Right cardiac atrium (tissue), 5 donors: ENCODE measurements at regions of chr3 and their contacts with region 1.

Region 1: GRCh38 chr3:149129326-149130205 is at the start of gene HPS3:
- DNase-seq: peak; percentile 94 to 98 (median 97)
- ATAC-seq: peak; percentile 99
- H3K4me3 ChIP-seq: peak within 1 kb of the TSS; percentile 87
- H3K27ac ChIP-seq: peak within 1 kb of the TSS; percentile 78
- H3K4me1 ChIP-seq: no peaks in the 10 kb centered on the region
- H3K27me3 ChIP-seq: no peaks in the 10 kb centered on the region
- total RNA-seq, gene HPS3: 7.4 to 9.7 (median 7.8) TPM

Region 2: DNA sequence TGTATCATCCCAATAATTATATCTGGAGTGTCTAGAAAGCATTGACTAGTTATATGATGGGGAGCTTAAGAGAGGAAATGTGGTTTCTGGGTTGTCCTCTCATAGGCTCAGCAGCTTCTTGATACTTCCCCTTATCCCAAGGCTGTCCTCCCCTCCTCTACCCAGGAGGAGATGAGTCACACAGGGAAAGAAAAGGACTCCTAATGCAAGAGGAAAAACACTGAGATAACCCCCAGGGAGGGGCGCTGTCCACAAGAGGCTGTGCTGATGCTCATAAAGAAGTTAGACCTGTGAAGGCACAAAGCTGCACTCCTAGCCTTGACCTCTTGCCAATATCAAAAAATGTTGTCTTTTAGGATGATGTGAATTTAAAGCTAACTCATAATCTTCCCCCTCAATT is 167.1 kb before region 1 on chr3:
- intact Hi-C with region 1: loop called in 1 of 4 experiments (anchors 10 kb)
- DNase-seq: peak in 1 of 3 donors; percentile 33
- ATAC-seq: peak in 1 of 2 donors; percentile 80
- H3K4me3 ChIP-seq: no peak overlapping the region
- H3K27ac ChIP-seq: no peak overlapping the region
- H3K4me1 ChIP-seq: no peaks in the 10 kb centered on the region
- H3K27me3 ChIP-seq: no peaks in the 10 kb centered on the region

Region 3: DNA sequence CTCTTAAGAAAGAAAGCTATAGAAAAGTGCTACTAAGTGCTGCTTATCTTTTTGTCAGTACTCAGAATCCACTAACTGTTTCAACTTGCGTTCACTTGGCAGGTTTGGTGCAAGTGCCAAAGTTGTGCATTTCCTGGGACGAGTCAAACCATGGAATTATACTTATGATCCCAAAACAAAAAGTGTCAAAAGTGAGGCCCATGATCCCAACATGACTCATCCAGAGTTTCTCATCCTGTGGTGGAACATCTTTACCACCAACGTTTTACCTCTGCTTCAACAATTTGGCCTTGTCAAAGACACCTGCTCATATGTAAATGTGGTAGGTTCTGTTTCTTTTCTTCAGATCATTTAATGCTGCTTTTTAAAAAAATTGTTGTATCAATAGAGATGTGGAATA is 105.6 kb before region 1 on chr3:
- intact Hi-C with region 1: no loop called
- DNase-seq: no peak
- ATAC-seq: no peak
- H3K4me3 ChIP-seq: no peak overlapping the region
- H3K27ac ChIP-seq: no peak overlapping the region
- H3K4me1 ChIP-seq: peaks cover 6% of the 10 kb centered on the region
- H3K27me3 ChIP-seq: no peaks in the 10 kb centered on the region